HEK293 (cell line): ENCODE measurements at regions of chr7 and their contacts with region 1.

Region 1: GRCh38 chr7:23055582-23056178 is 41.8 kb upstream of the HYCC1 start:
- H3K4me3 ChIP-seq: no peak overlapping the region
- H3K27ac ChIP-seq: no peak overlapping the region
- H3K4me1 ChIP-seq: no peaks in the 10 kb centered on the region
- CTCF ChIP-seq: 0 out of 2 replicates have a peak, but pooled peaks have one; percentile 38

Region 2: GRCh38 chr7:22559829-22560489 is 495.7 kb before region 1 on chr7:
- CTCF ChIA-PET with region 1: interaction called, 113 read pairs
- POLR2A ChIA-PET with region 1: no interaction called
- H3K4me3 ChIP-seq: no peak overlapping the region
- H3K27ac ChIP-seq: no peak overlapping the region
- H3K4me1 ChIP-seq: peaks cover 19% of the 10 kb centered on the region
- CTCF ChIP-seq: peak; percentile 92

Region 3: GRCh38 chr7:22809902-22810642 is 245.6 kb before region 1 on chr7:
- CTCF ChIA-PET with region 1: interaction called, 10 read pairs
- POLR2A ChIA-PET with region 1: no interaction called
- H3K4me3 ChIP-seq: no peak overlapping the region
- H3K27ac ChIP-seq: no peak overlapping the region
- H3K4me1 ChIP-seq: no peaks in the 10 kb centered on the region
- CTCF ChIP-seq: no peak

Region 4: GRCh38 chr7:22854158-22855048 is 201.3 kb before region 1 on chr7:
- CTCF ChIA-PET with region 1: interaction called, 13 read pairs
- POLR2A ChIA-PET with region 1: no interaction called
- H3K4me3 ChIP-seq: peak overlapping the region; percentile 58
- H3K27ac ChIP-seq: peak overlapping the region; percentile 83
- H3K4me1 ChIP-seq: no peaks in the 10 kb centered on the region; the same call in 1 of the 2 replicates
- CTCF ChIP-seq: no peak

Region 5: GRCh38 chr7:22944022-22944421 is 111.7 kb before region 1 on chr7:
- CTCF ChIA-PET with region 1: interaction called, 10 read pairs
- POLR2A ChIA-PET with region 1: no interaction called
- H3K4me3 ChIP-seq: no peak overlapping the region
- H3K27ac ChIP-seq: no peak overlapping the region
- H3K4me1 ChIP-seq: peaks cover 9% of the 10 kb centered on the region; the same call in 1 of the 2 replicates
- CTCF ChIP-seq: no peak

Region 6: GRCh38 chr7:23026164-23026563 is 29.5 kb before region 1 on chr7:
- CTCF ChIA-PET with region 1: interaction called, 10 read pairs
- POLR2A ChIA-PET with region 1: no interaction called
- H3K4me3 ChIP-seq: no peak overlapping the region
- H3K27ac ChIP-seq: no peak overlapping the region
- H3K4me1 ChIP-seq: no peaks in the 10 kb centered on the region
- CTCF ChIP-seq: no peak

Region 7: GRCh38 chr7:23072048-23072447 is 16.4 kb after region 1 on chr7:
- CTCF ChIA-PET with region 1: interaction called, 14 read pairs
- POLR2A ChIA-PET with region 1: no interaction called
- H3K4me3 ChIP-seq: no peak overlapping the region
- H3K27ac ChIP-seq: no peak overlapping the region
- H3K4me1 ChIP-seq: peaks cover 34% of the 10 kb centered on the region; the same call in 1 of the 2 replicates
- CTCF ChIP-seq: no peak; the same call in 1 of the 2 replicates

Region 8: GRCh38 chr7:23696916-23697441 is 641.3 kb after region 1 on chr7:
- CTCF ChIA-PET with region 1: no interaction called
- POLR2A ChIA-PET with region 1: no interaction called
- H3K4me3 ChIP-seq: no peak overlapping the region
- H3K27ac ChIP-seq: no peak overlapping the region
- H3K4me1 ChIP-seq: no peaks in the 10 kb centered on the region
- CTCF ChIP-seq: peak; percentile 39; the same call in 1 of the 2 replicates